Mammary epithelial cell (primary cell): ENCODE measurements at regions of chr7 and their contacts with region 1.

Region 1: GRCh38 chr7:80392229-80393169 is 119.4 kb downstream of the GNAT3 start:
- DNase-seq: peak; percentile 11
- H3K4me3 ChIP-seq: no peak overlapping the region
- H3K27ac ChIP-seq: no peak overlapping the region
- H3K4me1 ChIP-seq: peaks cover 4% of the 10 kb centered on the region
- H3K27me3 ChIP-seq: no peaks in the 10 kb centered on the region
- CTCF ChIP-seq: peak; percentile 54

Region 2: GRCh38 chr7:80060218-80060806 is 332.2 kb before region 1 on chr7:
- CTCF ChIA-PET with region 1: no interaction called
- dilution Hi-C with region 1: no loop called
- in situ Hi-C with region 1: no loop called
- intact Hi-C with region 1: loop called (anchors 2 kb)
- DNase-seq: peak; percentile 43
- H3K4me3 ChIP-seq: no peak overlapping the region
- H3K27ac ChIP-seq: no peak overlapping the region
- H3K4me1 ChIP-seq: no peaks in the 10 kb centered on the region
- H3K27me3 ChIP-seq: no peaks in the 10 kb centered on the region
- CTCF ChIP-seq: peak; percentile 38 to 51

Region 3: GRCh38 chr7:80095545-80095944 is 297.0 kb before region 1 on chr7:
- CTCF ChIA-PET with region 1: no interaction called
- dilution Hi-C with region 1: no loop called
- in situ Hi-C with region 1: loop called in 1 of 2 experiments (anchors 25 kb)
- intact Hi-C with region 1: no loop called
- DNase-seq: no peak
- H3K4me3 ChIP-seq: no peak overlapping the region
- H3K27ac ChIP-seq: no peak overlapping the region
- H3K4me1 ChIP-seq: no peaks in the 10 kb centered on the region
- H3K27me3 ChIP-seq: no peaks in the 10 kb centered on the region
- CTCF ChIP-seq: peak; percentile 22 to 46

Region 4: GRCh38 chr7:80218723-80219122 is 173.8 kb before region 1 on chr7:
- CTCF ChIA-PET with region 1: no interaction called
- dilution Hi-C with region 1: no loop called
- in situ Hi-C with region 1: loop called in 1 of 2 experiments (anchors 10 kb)
- intact Hi-C with region 1: loop called (anchors 5 kb)
- DNase-seq: peak; percentile 94
- H3K4me3 ChIP-seq: no peak overlapping the region
- H3K27ac ChIP-seq: peak overlapping the region; percentile 77
- H3K4me1 ChIP-seq: peaks cover 9% of the 10 kb centered on the region
- H3K27me3 ChIP-seq: no peaks in the 10 kb centered on the region
- CTCF ChIP-seq: no peak

Region 5: GRCh38 chr7:80231707-80232106 is 160.8 kb before region 1 on chr7:
- CTCF ChIA-PET with region 1: interaction called, 8 read pairs
- dilution Hi-C with region 1: no loop called
- in situ Hi-C with region 1: no loop called
- intact Hi-C with region 1: loop called (anchors 5 kb)
- DNase-seq: peak; percentile 84
- H3K4me3 ChIP-seq: no peak overlapping the region
- H3K27ac ChIP-seq: peak overlapping the region; percentile 59
- H3K4me1 ChIP-seq: peaks cover 25% of the 10 kb centered on the region
- H3K27me3 ChIP-seq: no peaks in the 10 kb centered on the region
- CTCF ChIP-seq: no peak

Region 6: GRCh38 chr7:80312139-80312661 is 80.3 kb before region 1 on chr7:
- CTCF ChIA-PET with region 1: no interaction called
- dilution Hi-C with region 1: no loop called
- in situ Hi-C with region 1: no loop called
- intact Hi-C with region 1: loop called (anchors 5 kb)
- DNase-seq: peak; percentile 78
- H3K4me3 ChIP-seq: peak overlapping the region in 2 of 3 experiments; percentile 15 to 29
- H3K27ac ChIP-seq: peak overlapping the region; percentile 99
- H3K4me1 ChIP-seq: peaks cover 20% of the 10 kb centered on the region
- H3K27me3 ChIP-seq: no peaks in the 10 kb centered on the region
- CTCF ChIP-seq: peak in 1 of 2 donors; percentile 6